Activated T-helper 2 cell treated with anti-CD3 and anti-CD28 coated beads, Interferon-gamma antibody, Interleukin-2, Interleukin-4, amounts not matched to agents 10 μg/mL and 5 μg/mL and 100 μg/mL, durations not matched to agents 14 hours and 24 hours and 36 hours (primary cell): ENCODE measurements at regions of chr7 and their contacts with region 1.

Region 1: DNA sequence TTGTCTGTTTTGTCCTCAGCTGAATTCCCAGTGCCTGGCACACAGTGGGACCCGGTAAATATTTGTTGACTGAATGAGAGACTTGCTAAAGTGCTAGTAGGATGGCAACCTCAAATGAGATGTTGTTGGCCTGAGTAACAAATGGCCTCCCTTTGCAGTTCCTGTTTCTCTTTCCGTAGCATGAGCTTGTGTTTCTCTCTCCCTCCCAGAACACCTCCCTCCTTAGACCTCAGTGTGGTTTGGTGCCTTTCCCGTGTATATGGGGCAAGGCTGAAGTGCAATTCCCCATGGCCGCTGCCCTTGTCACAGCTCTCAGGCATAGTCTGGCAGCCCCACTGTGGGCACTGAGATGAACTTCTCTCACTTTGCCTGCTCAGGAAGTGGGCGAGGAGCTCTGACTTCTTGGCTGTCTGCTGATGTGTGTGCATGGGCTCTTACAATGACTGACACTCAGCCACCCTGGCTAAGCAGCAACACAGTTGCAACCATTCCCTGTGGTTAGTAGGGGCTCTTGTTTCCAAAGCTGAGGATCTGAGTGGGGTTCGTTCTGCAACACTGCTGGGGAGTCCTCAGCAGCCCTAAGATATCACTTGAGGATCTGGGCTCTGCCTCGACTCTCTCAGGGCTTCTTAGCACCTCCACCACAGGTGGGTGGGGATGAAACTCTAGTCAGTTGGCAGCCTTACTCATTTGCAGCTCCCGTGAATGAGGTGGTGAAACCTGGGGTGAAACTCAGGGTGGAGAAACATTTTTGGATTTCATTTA is 136.1 kb downstream of the ICA1 start:
- DNase-seq: peak; percentile 72
- H3K4me3 Mint-ChIP-seq: peak overlapping the region; percentile 64
- H3K27ac Mint-ChIP-seq: peak overlapping the region; percentile 98
- H3K4me1 Mint-ChIP-seq: peaks cover 76% of the 10 kb centered on the region
- H3K27me3 Mint-ChIP-seq: no peaks in the 10 kb centered on the region

Region 2: DNA sequence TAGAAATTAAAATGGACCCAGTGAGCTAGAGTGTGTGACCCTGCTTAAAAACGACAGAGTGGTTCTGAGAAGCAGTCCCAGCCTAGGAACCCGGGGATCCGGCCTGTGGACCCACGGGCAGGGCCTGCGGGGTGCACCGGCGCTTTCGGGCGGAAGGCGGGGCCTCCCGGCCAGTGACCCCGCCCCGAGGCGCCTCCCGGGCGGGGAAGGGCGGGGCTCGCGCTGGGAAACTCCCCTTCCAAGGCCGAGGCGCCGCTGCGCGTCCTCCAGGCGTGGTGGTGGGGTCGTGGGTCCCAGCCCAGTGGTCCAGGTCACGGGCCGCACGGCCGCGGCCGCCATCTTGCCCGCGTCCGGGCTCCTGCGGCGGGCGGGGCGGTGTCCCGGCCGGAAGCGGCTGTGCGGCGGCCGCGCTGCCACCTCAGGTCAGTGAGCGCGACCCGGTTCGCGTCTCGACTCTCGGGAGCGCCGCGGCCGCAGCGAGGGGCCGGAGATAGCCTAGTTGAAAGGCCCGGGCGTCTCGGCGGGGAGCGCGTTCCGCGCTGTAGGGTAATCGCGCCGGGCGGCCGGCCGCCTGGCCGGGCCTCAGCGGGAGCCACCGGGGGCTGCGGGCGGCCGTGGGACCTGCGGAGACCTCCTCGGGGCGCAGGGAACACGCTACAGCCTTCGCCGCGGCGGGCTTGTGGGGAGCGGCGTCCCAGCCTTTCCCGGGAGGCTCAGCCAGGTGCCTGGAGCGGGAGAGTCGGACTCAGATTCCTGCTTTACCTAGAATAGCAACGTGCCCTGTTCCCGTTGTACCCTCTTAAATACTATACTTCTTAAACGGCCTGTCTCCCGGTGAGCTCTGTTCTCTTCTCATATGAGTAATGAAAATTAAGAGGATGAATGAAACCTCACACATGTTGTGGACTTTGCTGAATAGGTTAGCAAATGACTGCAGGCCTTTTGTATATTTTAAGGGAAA is 558.9 kb before region 1 on chr7 and contains the start of gene MIOS:
- intact Hi-C with region 1: loop called (anchors 1 kb)
- DNase-seq: peak; percentile 76
- H3K4me3 Mint-ChIP-seq: peak within 1 kb of the TSS; percentile 76
- H3K27ac Mint-ChIP-seq: peak within 1 kb of the TSS; percentile 61
- H3K4me1 Mint-ChIP-seq: peaks cover 27% of the 10 kb centered on the region
- H3K27me3 Mint-ChIP-seq: peaks cover 9% of the 10 kb centered on the region
- total RNA-seq, gene MIOS: 29.8 and 30.3 TPM in 2 replicates

Region 3: DNA sequence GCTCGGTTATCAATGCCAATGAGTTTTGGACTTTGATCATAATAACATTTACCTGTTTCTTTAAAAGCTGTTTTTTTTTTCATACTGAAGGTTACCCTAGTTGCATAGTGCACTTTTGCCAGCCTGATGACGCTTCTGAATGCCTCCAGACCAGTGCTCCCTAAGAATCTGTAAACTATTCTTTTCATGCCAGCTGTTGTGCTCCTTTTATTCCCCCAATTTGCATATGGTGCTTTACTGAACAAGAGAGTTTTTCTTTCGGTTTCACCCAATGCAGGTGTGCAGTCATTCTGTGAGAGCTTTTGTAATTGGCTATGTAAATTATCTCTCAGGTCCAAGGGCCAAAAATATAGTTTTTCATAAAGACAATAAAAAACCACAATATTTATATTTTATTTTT is 205.4 kb before region 1 on chr7:
- intact Hi-C with region 1: loop called (anchors 5 kb)
- DNase-seq: no peak
- H3K4me3 Mint-ChIP-seq: no peak overlapping the region
- H3K27ac Mint-ChIP-seq: no peak overlapping the region
- H3K4me1 Mint-ChIP-seq: peaks cover 36% of the 10 kb centered on the region
- H3K27me3 Mint-ChIP-seq: no peaks in the 10 kb centered on the region

Region 4: DNA sequence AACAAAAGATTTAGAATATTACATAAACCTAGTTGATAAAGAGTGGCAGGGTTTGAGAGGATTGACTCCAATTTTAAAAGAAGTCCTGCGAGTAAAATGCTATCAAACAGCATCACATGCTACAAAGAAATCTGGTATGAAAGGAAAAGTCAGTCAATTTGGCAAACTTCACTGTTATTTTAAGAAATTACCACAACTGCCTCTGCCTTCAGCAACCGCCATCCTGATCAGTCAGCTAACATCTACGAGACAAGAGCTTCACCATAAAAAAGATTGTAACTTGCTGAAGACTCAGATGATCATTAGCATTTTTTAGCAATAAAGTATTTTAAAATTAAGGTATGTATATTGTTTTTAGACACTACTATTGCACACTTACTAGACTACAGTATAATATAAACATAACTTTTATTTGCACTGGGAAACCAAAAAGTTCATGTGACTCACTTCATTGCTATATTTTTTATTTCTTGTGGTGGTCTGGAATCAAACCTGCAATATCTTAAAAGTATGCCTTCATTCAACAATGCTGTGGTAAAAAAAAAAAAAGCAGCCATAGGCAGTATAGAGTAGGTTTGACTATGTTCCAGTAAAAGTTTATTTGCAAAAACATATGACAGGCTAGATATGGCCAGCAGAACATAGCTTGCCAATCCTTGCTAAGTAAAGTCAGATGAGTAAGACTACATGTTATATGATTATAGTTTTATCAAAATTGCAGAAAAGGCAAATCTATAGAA is 82.9 kb before region 1 on chr7:
- intact Hi-C with region 1: loop called (anchors 5 kb)
- DNase-seq: no peak
- H3K4me3 Mint-ChIP-seq: no peak overlapping the region
- H3K27ac Mint-ChIP-seq: peak overlapping the region; percentile 49
- H3K4me1 Mint-ChIP-seq: peaks cover 56% of the 10 kb centered on the region
- H3K27me3 Mint-ChIP-seq: no peaks in the 10 kb centered on the region

Region 5: GRCh38 chr7:8176370-8177081 is 50.7 kb after region 1 on chr7:
- intact Hi-C with region 1: loop called (anchors 1 kb)
- DNase-seq: peak; percentile 62
- H3K4me3 Mint-ChIP-seq: peak overlapping the region; percentile 62
- H3K27ac Mint-ChIP-seq: peak overlapping the region; percentile 95
- H3K4me1 Mint-ChIP-seq: peaks cover 49% of the 10 kb centered on the region
- H3K27me3 Mint-ChIP-seq: no peaks in the 10 kb centered on the region

Region 6: GRCh38 chr7:9175871-9176270 is 1050.0 kb after region 1 on chr7:
- intact Hi-C with region 1: no loop called
- DNase-seq: no peak
- H3K4me3 Mint-ChIP-seq: no peak overlapping the region
- H3K27ac Mint-ChIP-seq: no peak overlapping the region
- H3K4me1 Mint-ChIP-seq: no peaks in the 10 kb centered on the region
- H3K27me3 Mint-ChIP-seq: no peaks in the 10 kb centered on the region